Thyroid gland (tissue), 4 donors: ENCODE measurements at regions of chr22 and their contacts with region 1.

Region 1: DNA sequence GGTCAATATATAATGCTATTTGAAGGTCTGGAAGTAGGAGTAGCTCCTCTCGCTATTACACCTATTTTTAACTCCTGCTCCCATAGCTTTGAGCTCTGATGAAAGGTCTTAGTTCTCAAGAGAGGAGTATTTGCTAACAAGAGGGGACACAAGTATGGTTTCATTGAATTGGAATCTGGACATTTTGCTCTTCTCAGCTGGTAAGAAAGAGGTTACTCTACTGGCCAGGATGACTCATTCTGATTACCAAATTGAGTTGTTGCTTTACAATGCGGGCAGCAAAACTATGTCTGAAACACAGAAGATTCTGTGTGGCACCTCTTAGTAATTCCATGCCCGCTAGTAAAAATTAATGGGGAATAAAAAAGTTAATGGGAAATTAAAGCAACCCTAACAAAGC is 63.6 kb upstream of the EP300 start:
- DNase-seq: no peak
- H3K4me3 ChIP-seq: no peak overlapping the region
- H3K27ac ChIP-seq: peak overlapping the region in 1 of 3 donors; percentile 19
- H3K4me1 ChIP-seq: peaks cover 4 to 13% of the 10 kb centered on the region in 2 donors
- H3K27me3 ChIP-seq: no peaks in the 10 kb centered on the region
- CTCF ChIP-seq: no peak
- POLR2A ChIP-seq: no peak

Region 2: DNA sequence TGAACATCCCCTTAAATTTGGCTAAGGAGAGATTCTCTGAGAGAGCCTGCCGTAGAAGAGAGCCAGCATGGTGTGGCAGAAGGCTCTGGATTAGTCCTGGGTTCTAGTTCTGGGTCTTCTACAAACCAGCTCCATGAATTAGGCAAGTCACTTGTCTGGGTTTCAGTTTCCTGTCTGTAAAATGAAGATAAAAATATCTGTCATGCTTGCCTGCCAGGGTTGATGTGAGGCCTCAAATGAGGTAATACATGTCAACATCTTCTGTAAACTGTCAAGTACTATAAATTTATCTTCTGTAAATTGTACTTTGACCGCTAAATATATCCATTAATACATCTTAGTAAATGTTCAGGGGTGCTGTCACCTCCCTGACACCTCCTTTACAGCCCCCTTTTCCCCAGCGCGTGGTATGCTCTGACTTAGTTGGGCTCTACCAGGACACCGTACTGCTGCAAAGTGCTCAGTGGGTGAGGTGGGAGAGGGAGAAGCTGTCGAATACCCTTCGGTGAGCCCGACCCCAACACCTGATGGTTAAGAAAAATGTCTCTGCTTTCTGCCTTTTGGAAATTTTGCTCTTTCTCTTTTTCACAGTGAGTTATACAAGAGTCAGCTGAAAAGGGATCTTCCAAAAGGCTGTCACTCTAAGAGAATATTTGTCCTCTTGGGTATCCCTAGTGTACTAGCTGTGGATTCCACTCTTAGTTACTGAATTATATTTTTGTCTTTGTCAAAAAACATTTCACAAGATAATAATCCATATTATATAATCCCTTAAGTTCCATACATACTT is 62.7 kb before region 1 on chr22:
- intact Hi-C with region 1: no loop called
- DNase-seq: no peak
- H3K4me3 ChIP-seq: no peak overlapping the region
- H3K27ac ChIP-seq: no peak overlapping the region
- H3K4me1 ChIP-seq: peaks cover 0 to under 1% of the 10 kb centered on the region in 2 donors
- H3K27me3 ChIP-seq: no peaks in the 10 kb centered on the region
- CTCF ChIP-seq: no peak
- POLR2A ChIP-seq: no peak

Region 3: GRCh38 chr22:40976866-40977700 is 51.8 kb before region 1 on chr22:
- intact Hi-C with region 1: no loop called
- DNase-seq: no peak
- H3K4me3 ChIP-seq: no peak overlapping the region
- H3K27ac ChIP-seq: no peak overlapping the region
- H3K4me1 ChIP-seq: no peaks in the 10 kb centered on the region
- H3K27me3 ChIP-seq: no peaks in the 10 kb centered on the region
- CTCF ChIP-seq: no peak
- POLR2A ChIP-seq: no peak

Region 4: DNA sequence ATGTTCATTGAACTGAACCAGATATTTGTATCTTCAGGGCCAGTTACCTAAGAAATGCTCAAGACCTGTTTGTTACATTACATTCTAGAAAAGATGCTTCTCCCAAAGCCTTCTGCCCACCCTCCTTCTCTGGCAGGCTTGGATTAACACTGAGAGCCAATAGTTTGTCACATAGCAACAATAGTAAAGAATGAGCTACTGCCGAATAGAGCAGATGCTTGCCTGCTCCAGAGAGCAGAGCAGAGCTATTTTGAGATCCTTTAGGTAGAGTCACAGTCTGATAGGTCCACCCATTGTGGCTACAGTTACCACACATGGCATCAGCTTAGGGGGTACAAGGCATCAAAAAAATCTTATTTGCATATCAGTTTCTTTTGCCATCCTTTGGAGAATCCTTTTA is 50.1 kb after region 1 on chr22:
- intact Hi-C with region 1: loop called (anchors 5 kb)
- DNase-seq: no peak
- H3K4me3 ChIP-seq: no peak overlapping the region
- H3K27ac ChIP-seq: no peak overlapping the region
- H3K4me1 ChIP-seq: no peaks in the 10 kb centered on the region
- H3K27me3 ChIP-seq: no peaks in the 10 kb centered on the region
- CTCF ChIP-seq: no peak
- POLR2A ChIP-seq: no peak